H1 (cell line): ENCODE measurements at regions of chr12 and their contacts with region 1.

Region 1: DNA sequence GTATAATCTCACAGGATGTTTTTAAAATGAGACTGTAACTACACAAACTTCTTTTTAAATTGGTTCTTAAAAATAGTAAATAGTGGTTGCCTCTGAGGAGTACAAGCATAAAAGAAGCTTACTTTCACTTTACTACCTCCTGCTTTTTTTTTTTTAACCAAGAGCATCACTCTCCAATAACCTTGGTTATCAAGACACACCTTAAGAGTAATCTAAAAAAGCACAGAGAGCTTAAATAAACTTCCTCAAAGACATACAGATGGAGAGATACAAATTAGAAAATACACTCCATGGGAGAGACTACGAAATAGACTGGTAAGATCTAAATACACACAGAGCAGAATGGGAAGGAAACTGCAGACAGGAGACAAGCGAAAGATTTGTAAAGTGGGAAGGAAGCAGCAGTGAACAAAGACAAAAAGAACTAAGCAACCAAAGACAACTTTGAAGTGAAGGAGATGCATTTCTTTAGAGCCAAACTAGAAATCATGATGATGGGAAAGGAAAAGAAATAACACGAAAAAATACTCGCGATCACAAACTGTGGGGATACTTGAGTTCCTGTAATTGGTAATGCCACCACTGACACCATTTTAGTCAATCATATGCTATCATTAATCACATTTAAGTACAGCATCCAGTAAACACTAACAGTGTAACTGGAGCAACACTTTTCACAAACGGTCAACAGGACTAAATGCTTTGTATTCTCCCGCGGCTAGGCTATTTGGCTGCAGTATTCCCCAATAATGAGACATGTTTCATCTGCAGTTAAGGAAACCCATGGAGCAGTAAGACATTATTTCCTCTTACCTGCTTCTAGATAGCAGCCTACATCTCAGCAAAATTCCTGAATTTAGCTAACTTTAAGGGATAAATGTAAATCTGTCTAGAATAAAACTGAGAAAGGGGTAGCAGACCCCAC is 8.2 kb downstream of the SINHCAF start:
- DNase-seq: no peak
- H3K4me3 ChIP-seq: peak overlapping the region in 3 of 4 experiments; percentile 2 to 99 (median 16); a peak in 2 of 8 replicates
- H3K27ac ChIP-seq: no peak overlapping the region
- H3K4me1 ChIP-seq: peaks cover 9 to 31% (median 22%) of the 10 kb centered on the region in 4 experiments
- H3K27me3 ChIP-seq: no peaks in the 10 kb centered on the region
- CTCF ChIP-seq: no peak
- EP300 ChIP-seq: no peak
- POLR2A ChIP-seq: peak in 1 of 2 experiments; percentile 57; a peak in 1 of 3 replicates
- RAD21 ChIP-seq: no peak

Region 2: DNA sequence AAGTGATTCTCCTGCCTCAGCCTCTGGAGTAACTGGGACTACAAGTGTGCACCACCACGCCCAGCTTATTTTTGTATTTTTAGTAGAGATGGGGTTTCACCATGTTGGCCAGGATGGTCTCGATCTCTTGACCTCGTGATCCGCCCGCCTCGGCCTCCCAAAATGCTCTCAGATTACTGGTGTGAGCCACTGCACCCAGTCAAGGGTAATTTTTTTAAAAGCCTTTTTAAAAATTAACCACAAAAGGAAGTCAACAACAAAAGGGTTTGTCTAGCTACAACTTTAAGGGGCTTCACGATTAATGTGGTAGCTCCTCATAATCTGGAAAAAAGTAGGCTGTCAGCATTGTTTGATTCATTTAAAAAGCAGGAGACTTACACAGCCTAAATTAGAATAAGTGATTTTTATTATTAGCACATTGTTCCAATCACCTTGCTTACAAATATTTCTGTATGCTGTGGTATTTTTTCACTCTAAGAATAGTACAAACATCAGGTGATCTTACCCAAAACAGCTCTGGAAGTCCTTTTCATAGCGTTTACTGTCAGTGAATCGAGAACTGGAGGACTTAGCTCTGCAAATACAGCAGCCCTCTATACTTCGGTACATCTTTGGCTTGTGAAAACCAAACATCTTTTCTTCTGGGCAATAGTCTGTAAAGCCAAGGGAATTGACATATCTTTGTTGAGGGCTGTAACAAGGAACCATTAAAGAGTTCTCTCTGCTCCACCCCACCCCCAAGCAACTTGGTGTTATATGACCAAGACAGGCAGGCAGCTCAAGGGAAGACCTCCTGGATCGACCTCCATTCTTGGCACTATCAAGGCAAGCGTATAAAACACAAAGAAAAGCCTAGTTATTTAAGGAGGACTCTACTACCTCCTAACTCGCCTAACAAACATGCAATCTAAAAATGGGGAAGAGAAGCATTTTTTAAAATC is 19.9 kb before region 1 on chr12:
- CTCF ChIA-PET with region 1: interaction called, 5 read pairs
- POLR2A ChIA-PET with region 1: interaction called, 21 read pairs
- DNase-seq: no peak
- H3K4me3 ChIP-seq: no peak overlapping the region
- H3K27ac ChIP-seq: no peak overlapping the region
- H3K4me1 ChIP-seq: peaks cover 0 to 12% (median 4%) of the 10 kb centered on the region in 4 experiments; a peak in 3 of 7 replicates
- H3K27me3 ChIP-seq: no peaks in the 10 kb centered on the region
- CTCF ChIP-seq: no peak
- EP300 ChIP-seq: no peak
- POLR2A ChIP-seq: no peak
- RAD21 ChIP-seq: no peak

Region 3: DNA sequence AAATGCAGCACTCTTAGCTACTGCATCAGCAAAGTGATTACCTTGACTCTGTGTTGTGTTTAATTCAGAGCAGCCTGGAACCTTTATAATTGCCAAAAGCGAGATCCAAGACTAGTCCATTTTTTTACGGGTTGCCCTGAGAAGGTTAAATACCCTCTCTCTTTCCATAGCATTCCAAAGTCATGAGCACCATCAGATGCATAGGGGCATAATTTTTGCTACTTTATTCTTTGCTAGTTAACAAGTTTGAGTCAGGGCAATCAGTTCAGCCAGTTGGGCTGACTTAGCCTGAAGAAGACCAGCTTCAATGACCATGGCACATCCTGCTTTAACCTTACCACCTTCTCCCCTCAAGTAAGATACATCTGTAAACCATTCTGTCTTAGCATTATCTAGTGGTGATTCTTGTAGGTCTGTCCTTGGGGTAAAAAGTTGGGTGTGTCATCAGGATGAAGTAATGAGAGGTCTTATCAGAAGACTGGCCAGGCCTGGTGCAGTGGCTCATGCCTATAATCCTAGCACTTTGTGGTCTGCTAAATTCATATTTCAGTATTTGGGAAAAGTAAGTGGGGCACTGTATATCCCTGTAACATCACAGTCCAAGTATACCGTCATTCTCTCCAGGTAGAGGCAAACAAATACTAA is 11.0 kb before region 1 on chr12:
- CTCF ChIA-PET with region 1: interaction called, 5 read pairs
- POLR2A ChIA-PET with region 1: interaction called, 17 read pairs
- DNase-seq: no peak
- H3K4me3 ChIP-seq: no peak overlapping the region
- H3K27ac ChIP-seq: no peak overlapping the region
- H3K4me1 ChIP-seq: peaks cover 2 to 17% (median 8%) of the 10 kb centered on the region in 4 experiments; a peak in 5 of 7 replicates
- H3K27me3 ChIP-seq: no peaks in the 10 kb centered on the region
- CTCF ChIP-seq: no peak
- EP300 ChIP-seq: no peak
- POLR2A ChIP-seq: no peak
- RAD21 ChIP-seq: no peak

Region 4: GRCh38 chr12:31369712-31370521 is 52.2 kb after region 1 on chr12:
- CTCF ChIA-PET with region 1: interaction called, 4 read pairs
- POLR2A ChIA-PET with region 1: interaction called, 22 read pairs
- DNase-seq: no peak
- H3K4me3 ChIP-seq: peak overlapping the region; percentile 6 to 56 (median 42); a peak in 7 of 8 replicates
- H3K27ac ChIP-seq: peak overlapping the region; percentile 91
- H3K4me1 ChIP-seq: peaks cover 14 to 24% (median 18%) of the 10 kb centered on the region in 4 experiments; a peak in 6 of 7 replicates
- H3K27me3 ChIP-seq: no peaks in the 10 kb centered on the region
- CTCF ChIP-seq: no peak
- EP300 ChIP-seq: no peak
- POLR2A ChIP-seq: no peak
- RAD21 ChIP-seq: no peak